ENCODE measurements at regions of chr3 and their contacts with region 1.

Region 1: DNA sequence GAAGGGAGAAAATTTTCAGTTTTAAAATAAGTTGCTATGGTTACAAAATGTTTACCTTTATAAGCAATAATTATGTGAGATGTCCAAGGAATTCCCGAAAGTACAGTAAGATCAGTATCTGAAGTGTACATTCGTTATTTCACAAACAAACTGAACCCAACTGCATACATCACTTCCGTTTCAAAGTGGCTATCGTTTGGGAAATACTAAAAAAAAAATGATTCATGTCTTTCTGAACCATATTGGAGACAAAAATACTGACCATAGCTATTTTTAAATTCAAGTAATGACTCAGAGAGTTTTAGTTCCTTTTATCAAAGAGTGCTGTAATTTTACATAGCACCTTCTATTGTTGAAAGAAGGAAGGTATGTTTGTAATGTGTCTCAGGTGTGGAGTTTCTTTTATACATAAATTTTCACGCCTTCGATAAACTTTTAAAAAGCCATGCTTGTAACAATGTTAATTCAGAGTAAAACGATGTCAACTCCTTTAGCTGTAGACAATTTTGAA is 8.0 kb upstream of the ANKRD28 start:
- DNase-seq: peak in 1 of 2 donors; percentile 60
- H3K4me3 ChIP-seq: no peak overlapping the region
- H3K27ac ChIP-seq: peak overlapping the region in 3 of 5 donors; percentile 14 to 60 (median 24)
- H3K4me1 ChIP-seq: peaks cover 0 to 58% (median 22%) of the 10 kb centered on the region in 4 donors
- H3K27me3 ChIP-seq: no peaks in the 10 kb centered on the region
- CTCF ChIP-seq: no peak
- EP300 ChIP-seq: no peak
- POLR2A ChIP-seq: no peak

Region 2: DNA sequence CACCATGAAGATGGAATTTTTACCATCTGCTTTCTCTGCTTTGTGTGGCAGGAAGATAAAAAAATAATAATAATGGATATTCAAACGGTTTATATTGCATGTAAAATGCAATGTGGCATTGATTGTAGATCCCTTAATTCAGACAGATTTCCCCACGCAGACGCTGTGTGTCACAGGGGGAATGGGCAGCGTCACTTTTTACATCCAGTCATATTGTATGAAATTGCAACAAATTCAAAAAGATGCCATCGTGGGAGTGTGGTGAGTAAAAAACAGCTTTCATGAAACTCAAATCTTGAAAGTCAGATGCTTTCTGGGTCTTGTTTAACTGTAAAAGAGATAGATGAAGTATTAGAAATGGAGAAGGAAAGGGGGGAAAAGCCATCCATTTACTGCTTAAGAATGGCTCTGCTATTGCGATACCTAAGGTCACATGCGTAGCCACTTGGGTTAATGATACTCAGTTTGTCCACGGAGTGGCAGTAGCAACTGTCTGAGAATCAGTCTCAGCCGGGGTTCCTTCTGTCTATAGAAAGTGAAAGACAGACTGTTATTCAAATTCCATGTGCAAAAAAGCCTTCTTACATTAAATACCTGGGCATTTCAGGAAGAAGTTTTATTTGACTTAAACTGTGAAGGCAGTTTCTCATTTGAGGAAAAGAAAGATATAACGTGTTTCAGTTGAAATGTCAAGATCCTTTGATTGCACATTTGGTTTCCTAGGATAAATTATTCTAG is 175.8 kb before region 1 on chr3:
- intact Hi-C with region 1: loop called (anchors 5 kb)
- DNase-seq: peak; percentile 63 to 89
- H3K4me3 ChIP-seq: peak overlapping the region; percentile 12 to 33 (median 25)
- H3K27ac ChIP-seq: peak overlapping the region in 4 of 5 donors; percentile 5 to 67 (median 40)
- H3K4me1 ChIP-seq: peaks cover 20 to 52% (median 33%) of the 10 kb centered on the region in 4 donors
- H3K27me3 ChIP-seq: no peaks in the 10 kb centered on the region
- CTCF ChIP-seq: peak in 5 of 7 experiments; percentile 55 to 74 (median 66)
- EP300 ChIP-seq: no peak
- POLR2A ChIP-seq: no peak